B cell (primary cell): ENCODE measurements at regions of chr13 and their contacts with region 1.

Region 1: GRCh38 chr13:68927387-68928026 is 1180.1 kb upstream of the ATXN8OS start:
- DNase-seq: peak; percentile 5
- ATAC-seq: peak; percentile 36
- H3K4me3 ChIP-seq: no peak overlapping the region
- H3K4me3 Mint-ChIP-seq: no peak overlapping the region
- H3K27ac ChIP-seq: no peak overlapping the region
- H3K27ac Mint-ChIP-seq: no peak overlapping the region
- H3K4me1 ChIP-seq: no peaks in the 10 kb centered on the region
- H3K4me1 Mint-ChIP-seq: no peaks in the 10 kb centered on the region
- H3K27me3 ChIP-seq: no peaks in the 10 kb centered on the region
- H3K27me3 Mint-ChIP-seq: no peaks in the 10 kb centered on the region
- CTCF ChIP-seq: peak; percentile 17

Region 2: DNA sequence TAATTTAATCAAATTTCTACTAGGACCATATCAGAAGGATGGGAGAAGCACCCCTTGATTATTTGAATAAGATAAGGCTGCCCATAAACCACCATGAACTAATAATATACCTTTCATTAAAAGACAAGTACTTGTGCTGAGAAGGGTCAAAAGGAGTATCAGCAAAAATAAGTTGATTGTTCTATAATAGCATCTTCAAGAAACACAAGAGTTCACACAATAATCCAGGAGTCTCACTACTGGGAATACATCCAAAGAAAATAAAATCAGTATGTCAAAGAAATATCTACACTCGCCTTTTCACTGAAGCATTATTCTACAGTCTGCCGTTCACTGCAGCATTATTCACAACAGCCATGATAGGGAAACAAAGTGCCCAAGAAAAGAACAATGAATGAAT is 387.3 kb before region 1 on chr13:
- CTCF ChIA-PET with region 1: interaction called, 3 read pairs
- POLR2A ChIA-PET with region 1: no interaction called
- intact Hi-C with region 1: loop called (anchors 10 kb)
- DNase-seq: no peak
- ATAC-seq: no peak
- H3K4me3 ChIP-seq: no peak overlapping the region
- H3K4me3 Mint-ChIP-seq: no peak overlapping the region
- H3K27ac ChIP-seq: no peak overlapping the region
- H3K27ac Mint-ChIP-seq: no peak overlapping the region
- H3K4me1 ChIP-seq: no peaks in the 10 kb centered on the region
- H3K4me1 Mint-ChIP-seq: peaks cover 1% of the 10 kb centered on the region
- H3K27me3 ChIP-seq: no peaks in the 10 kb centered on the region
- H3K27me3 Mint-ChIP-seq: no peaks in the 10 kb centered on the region
- CTCF ChIP-seq: no peak